ENCODE measurements at regions of chr12 and their contacts with region 1.

Region 1: GRCh38 chr12:56622535-56622934 is 7.6 kb downstream of the BAZ2A start:
- DNase-seq: no peak
- H3K4me3 ChIP-seq: no peak overlapping the region
- CTCF ChIP-seq: no peak

Region 2: DNA sequence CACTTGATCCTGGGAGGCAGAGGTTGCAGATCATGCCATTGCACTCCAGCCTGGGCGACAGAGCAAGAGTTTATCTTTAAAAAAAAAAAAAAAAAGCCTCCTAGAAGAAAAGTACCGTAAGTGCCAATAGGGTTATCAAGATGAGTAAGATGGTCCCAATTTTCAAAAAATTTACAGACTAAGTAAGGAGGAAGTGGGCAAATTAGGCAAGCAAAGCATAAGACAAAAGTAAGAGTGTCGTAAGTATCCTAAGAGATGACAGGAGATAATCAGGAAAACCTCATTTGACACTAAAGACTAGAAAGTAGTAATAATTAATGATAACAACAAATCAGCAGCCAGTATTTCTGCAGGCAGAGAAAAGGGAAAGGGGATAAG is 707.1 kb before region 1 on chr12:
- in situ Hi-C with region 1: no loop called
- DNase-seq: no peak
- H3K4me3 ChIP-seq: no peak overlapping the region
- CTCF ChIP-seq: no peak

Region 3: GRCh38 chr12:56551070-56551469 is 71.5 kb before region 1 on chr12:
- in situ Hi-C with region 1: no loop called
- DNase-seq: no peak
- H3K4me3 ChIP-seq: no peak overlapping the region
- CTCF ChIP-seq: no peak

Region 4: GRCh38 chr12:56581418-56582145 is 41.0 kb before region 1 on chr12:
- in situ Hi-C with region 1: loop called (anchors 5 kb)
- DNase-seq: no peak
- H3K4me3 ChIP-seq: no peak overlapping the region
- CTCF ChIP-seq: no peak

Region 5: GRCh38 chr12:56688129-56688845 is 65.8 kb after region 1 on chr12 and contains the start of gene PTGES3:
- in situ Hi-C with region 1: no loop called
- DNase-seq: peak; percentile 95
- H3K4me3 ChIP-seq: peak within 1 kb of the TSS; percentile 99
- CTCF ChIP-seq: no peak

Measured in astrocyte of the cerebellum (primary cell).